Dorsolateral prefrontal cortex (tissue), 120 donors: ENCODE measurements at regions of chr12 and their contacts with region 1.

Region 1: DNA sequence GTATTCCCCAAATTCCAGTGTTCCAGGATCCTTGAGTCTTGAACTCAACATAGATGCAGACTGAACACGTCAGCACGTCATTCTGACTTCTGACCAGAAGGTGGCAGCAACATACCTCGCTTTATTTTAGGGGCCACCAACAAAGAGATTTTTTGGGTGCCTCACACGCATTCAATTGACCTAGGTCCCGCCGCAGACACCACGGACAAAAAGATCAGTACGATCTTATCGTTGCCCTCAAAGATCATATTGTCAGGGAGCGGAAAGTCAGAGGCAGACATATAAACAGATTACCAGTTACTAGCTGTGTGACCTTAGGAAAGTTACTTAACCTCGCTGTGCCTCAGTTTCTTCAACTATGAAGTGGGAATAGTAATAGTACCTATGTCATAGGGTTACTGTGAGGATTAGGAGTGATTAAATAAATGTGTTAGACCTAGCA is 6.5 kb upstream of the PRPH start:
- DNase-seq: peak in 5 of 10 donors; percentile 55 to 73 (median 62)
- H3K4me3 ChIP-seq: no peak overlapping the region
- H3K27ac ChIP-seq: no peak overlapping the region
- H3K27me3 ChIP-seq: peaks cover 0 to 3% (median 0%) of the 10 kb centered on the region in 45 donors
- CTCF ChIP-seq: peak; percentile 63 to 93 (median 84)

Region 2: DNA sequence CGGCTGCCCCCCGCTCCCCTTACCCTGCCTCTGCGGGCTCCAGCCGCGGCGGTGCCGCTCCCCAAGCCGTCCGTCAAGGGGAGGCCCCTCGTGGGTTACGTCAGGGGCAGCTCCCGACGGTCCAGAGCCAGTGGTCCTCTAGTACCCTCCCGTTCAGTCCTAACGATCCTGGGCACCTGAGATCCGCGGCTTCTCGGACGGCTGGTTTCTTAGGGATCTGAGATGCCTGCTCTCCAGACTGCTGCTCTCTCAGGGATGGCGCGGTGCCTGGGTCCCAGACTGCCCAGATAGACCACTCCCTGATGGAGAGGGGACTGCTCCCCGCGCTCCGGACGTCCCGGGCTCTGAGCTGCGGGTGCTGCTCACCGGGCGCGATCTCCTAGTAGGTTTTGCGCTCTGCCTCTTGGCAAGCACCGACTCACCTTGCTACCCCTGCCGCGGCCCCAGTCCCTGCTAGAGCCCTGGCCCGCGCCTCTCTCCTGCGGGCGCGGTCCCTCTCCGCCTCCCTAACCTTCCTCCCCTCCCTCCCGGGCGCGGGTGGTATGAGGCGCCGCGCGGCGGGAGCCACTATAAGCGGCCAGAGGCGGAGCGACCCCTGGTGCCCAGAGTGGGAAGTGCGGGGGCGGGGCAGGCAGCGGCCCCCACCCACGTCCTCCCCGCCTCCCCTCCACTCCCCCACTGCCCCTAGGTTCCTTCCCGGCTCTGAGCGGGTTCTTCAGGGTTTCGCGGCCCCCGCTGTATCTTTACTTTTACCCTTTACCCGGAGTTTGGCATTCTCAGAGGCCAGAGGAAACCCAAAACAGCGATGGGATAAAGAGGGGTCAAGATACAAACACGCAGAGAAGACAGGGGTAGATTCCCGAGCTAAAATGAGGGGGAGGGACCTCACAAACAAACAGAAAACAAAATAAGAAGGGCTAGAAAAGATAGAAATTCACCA is 48.5 kb after region 1 on chr12 and contains the start of gene C1QL4:
- intact Hi-C with region 1: loop called (anchors 2 to 5 kb)
- DNase-seq: peak in 9 of 10 donors; percentile 59 to 78 (median 72)
- H3K4me3 ChIP-seq: peak within 1 kb of the TSS in 57 of 59 donors; percentile 10 to 68 (median 46)
- H3K27ac ChIP-seq: no peak within 1 kb of the TSS
- H3K27me3 ChIP-seq: peaks cover 0 to 84% (median 43%) of the 10 kb centered on the region in 45 donors
- CTCF ChIP-seq: peak; percentile 48 to 99 (median 92)
- total RNA-seq, gene C1QL4: 0.19 to 1.4 (median 0.44) TPM in 69 of 120 experiments, not detected in the others

Region 3: DNA sequence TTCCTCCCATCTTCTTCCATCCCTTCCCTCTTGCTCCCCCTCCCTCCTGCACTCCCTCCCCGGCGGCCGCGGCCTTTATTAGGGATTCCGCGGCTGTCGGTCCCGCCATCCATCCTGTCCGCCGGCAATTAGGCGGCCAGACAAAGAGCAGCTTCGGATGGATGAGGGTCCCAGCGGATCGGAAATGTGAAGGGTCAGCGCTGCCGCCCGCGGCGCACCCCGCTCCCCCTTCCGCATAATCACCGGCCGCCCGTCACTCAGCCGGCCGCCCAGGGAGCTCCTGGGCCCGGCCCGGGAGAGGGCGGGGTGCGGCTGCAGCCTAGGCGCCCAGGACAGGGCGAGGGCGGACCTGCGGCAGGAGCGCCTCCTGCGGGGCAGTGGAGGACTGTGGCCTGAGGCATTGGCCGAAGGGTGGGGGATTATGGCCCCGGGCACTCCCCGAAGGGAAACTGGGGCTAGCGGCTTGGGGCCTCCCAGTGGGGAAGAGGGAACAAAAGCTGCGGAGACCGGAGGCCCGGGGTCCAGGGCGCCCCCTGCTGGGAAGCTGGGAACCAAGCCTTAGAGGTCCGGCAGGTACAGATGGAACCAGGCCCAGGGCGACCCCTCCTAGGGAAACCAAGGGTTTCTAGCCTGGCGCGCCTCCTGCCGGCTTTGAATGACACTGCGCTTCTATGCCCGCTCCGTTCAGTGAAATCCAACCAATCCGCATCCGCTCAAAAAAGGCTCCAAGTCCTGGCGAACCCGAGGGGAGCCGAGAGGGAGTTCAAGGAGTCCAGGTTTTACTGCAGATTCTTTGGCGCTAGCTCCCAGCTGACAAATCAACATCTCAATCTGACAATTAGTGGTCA is 53.9 kb after region 1 on chr12:
- intact Hi-C with region 1: loop called in 1 of 2 experiments (anchors 5 kb)
- DNase-seq: peak; percentile 59 to 76 (median 66)
- H3K4me3 ChIP-seq: peak overlapping the region; percentile 29 to 73 (median 57)
- H3K27ac ChIP-seq: peak overlapping the region in 8 of 59 donors; percentile 19 to 80 (median 29)
- H3K27me3 ChIP-seq: peaks cover 0 to 83% (median 34%) of the 10 kb centered on the region in 45 donors
- CTCF ChIP-seq: peak; percentile 55 to 90 (median 79)

Region 4: GRCh38 chr12:49358483-49359141 is 70.2 kb after region 1 on chr12:
- intact Hi-C with region 1: loop called (anchors 5 kb)
- DNase-seq: peak in 2 of 10 donors; percentile 56 to 61
- H3K4me3 ChIP-seq: peak overlapping the region in 1 of 59 donors; percentile 3
- H3K27ac ChIP-seq: no peak overlapping the region
- H3K27me3 ChIP-seq: no peaks in the 10 kb centered on the region
- CTCF ChIP-seq: peak in 55 of 56 donors; percentile 69 to 93 (median 81)

Region 5: GRCh38 chr12:49515266-49515665 is 226.8 kb after region 1 on chr12:
- intact Hi-C with region 1: loop called (anchors 5 to 10 kb)
- DNase-seq: no peak
- H3K4me3 ChIP-seq: no peak overlapping the region
- H3K27ac ChIP-seq: no peak overlapping the region
- H3K27me3 ChIP-seq: no peaks in the 10 kb centered on the region
- CTCF ChIP-seq: no peak